ENCODE measurements at regions of chr9 and their contacts with region 1.

Region 1: DNA sequence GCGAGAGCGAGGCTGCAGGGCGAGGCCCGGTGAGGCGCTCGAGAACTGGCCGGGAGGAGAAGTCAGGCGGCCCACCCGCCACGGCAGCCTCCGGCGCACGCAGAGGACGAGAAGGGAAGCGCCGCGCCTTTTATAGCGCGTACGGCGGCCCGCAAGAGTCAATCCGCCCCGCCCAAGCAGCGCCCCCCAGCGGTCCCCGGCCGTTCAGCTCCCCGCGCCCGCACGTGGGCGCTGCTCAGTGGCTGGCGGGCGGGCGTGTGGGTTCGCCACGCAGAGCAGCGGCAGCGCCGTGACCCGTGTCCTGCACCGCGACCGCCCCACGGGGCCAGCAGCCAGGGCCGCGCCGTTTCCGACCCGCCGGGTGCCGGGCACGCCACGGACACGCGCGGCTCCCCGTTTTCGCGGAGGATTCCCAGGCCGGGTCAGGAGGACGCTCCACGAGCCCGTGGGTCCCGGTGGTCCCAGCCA is 14.6 kb downstream of the LCN10 start:
- DNase-seq: peak in 1 of 2 experiments; percentile 93
- H3K4me3 ChIP-seq: peak overlapping the region; percentile 89 to 98 (median 95)
- H3K27ac ChIP-seq: peak overlapping the region; percentile 66; the same call in 1 of the 2 replicates
- H3K4me1 ChIP-seq: peaks cover 3 to 16% (median 5%) of the 10 kb centered on the region in 4 experiments
- H3K27me3 ChIP-seq: peaks cover 0 to 9% (median 5%) of the 10 kb centered on the region in 4 experiments; a peak in 5 of 7 replicates
- CTCF ChIP-seq: peak in 2 of 3 experiments; percentile 79 to 96; a peak in 3 of 4 replicates
- EP300 ChIP-seq: no peak; a peak in 1 of 3 replicates
- POLR2A ChIP-seq: peak in 1 of 2 experiments; percentile 99; a peak in 2 of 3 replicates
- RAD21 ChIP-seq: 0 out of 4 replicates have a peak, but pooled peaks of 1 of the 2 experiments have one; percentile 10

Region 2: GRCh38 chr9:136614967-136615623 is 113.0 kb before region 1 on chr9:
- CTCF ChIA-PET with region 1: no interaction called
- POLR2A ChIA-PET with region 1: no interaction called
- DNase-seq: peak in 1 of 2 experiments; percentile 71
- H3K4me3 ChIP-seq: no peak overlapping the region
- H3K27ac ChIP-seq: no peak overlapping the region
- H3K4me1 ChIP-seq: peaks cover 0 to 9% (median 6%) of the 10 kb centered on the region in 4 experiments; a peak in 6 of 7 replicates
- H3K27me3 ChIP-seq: no peaks in the 10 kb centered on the region
- CTCF ChIP-seq: peak in 2 of 3 experiments; percentile 38 to 42; a peak in 3 of 4 replicates
- EP300 ChIP-seq: no peak
- POLR2A ChIP-seq: no peak
- RAD21 ChIP-seq: peak; percentile 41 to 60; a peak in 3 of 4 replicates

Region 3: DNA sequence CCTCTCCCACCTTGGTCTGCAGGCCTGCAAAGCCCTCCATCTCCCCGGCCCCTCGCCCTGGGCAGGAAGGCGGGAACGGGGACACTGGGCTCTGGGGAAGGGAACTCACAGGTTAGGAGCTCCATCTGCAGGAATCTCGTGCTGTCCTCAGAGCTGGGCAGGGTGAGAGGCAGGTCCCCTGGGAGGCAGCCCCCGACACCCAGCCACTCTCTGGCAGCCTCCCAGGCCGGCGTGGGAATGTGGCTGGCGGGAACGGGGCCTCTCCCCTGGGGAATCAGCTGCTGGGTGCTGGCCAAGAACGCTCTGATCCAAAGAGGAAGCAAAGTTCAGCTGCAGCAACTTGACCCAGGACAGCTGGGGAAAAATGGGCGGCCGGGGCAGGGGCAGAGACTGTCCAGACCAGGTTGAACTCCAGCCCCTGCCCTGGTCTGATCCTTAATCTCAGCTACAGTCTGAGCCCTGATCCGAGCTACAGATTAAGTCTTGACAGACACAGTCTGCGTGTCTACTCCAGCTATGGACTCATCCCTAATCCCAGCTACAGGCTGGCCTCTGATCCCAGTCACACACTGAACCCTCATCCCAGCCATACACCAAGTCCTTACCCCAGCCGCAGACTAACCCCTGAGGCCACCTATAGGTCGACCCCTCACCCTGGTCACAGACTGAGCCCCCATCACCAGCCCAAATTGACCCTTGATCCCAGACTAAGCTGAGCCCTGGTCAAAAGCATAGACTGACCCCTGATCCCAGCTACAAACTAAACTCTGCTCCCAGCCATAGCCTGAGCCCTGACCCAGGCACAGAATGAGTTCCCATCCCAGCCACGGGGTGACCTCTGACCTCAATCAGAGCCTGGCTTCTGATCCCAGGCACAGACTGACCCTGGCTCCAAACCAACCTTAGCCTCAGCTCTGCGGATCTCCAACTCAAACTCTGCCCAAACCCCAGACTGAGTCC is 102.7 kb before region 1 on chr9:
- CTCF ChIA-PET with region 1: no interaction called
- POLR2A ChIA-PET with region 1: no interaction called
- DNase-seq: peak in 1 of 2 experiments; percentile 57
- H3K4me3 ChIP-seq: no peak overlapping the region
- H3K27ac ChIP-seq: no peak overlapping the region
- H3K4me1 ChIP-seq: peaks cover 0 to 5% (median 0%) of the 10 kb centered on the region in 4 experiments; a peak in 2 of 7 replicates
- H3K27me3 ChIP-seq: no peaks in the 10 kb centered on the region
- CTCF ChIP-seq: peak in 2 of 3 experiments; percentile 49 to 69; a peak in 3 of 4 replicates
- EP300 ChIP-seq: no peak
- POLR2A ChIP-seq: no peak
- RAD21 ChIP-seq: peak; percentile 78 to 85

Region 4: DNA sequence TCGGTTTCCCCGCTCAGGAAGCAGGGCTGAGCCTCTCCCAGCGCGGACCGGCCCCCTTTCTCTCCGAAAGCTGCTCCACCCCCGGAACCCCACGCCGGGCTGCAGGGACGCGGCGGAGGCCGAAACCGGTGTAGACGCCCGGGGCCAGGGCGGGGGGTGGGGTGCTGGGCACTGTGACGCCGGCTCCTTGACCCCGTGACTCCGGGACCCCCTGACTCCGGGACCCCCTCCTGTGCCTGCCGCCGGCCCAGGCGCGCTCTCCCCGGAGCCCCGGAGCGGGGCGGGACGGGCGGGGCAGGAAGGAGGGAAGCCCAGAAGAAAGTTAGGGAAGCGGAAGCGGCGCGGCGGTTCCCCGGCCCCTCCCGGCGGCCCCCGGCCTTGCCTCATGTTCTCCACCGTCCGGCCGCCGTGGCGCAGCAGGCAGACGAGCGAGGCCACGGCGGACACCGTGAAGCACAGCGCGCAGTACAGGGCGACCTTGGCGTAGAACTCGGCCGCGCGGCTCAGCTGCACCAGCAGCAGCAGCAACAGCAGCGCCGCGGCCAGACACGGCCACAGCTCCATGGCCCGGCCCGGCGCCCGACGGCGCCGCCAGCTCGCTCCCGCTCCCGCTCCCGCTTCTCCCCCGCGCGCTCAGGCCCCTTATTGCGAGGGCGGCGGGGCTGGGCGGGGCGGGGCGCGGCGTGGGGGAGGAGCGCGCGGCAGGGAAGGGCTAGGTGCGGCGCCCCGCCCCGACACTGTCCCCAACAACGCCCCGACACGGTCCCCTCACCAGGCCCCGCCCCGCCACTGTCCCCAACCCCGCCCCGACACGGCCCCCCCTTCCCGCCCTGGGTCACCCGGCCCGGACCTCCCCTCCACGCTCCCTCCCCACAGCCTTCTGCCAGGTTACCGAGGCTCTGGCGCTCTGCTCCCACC is 41.1 kb before region 1 on chr9 and contains the start of gene AGPAT2:
- CTCF ChIA-PET with region 1: interaction called, 5 read pairs
- POLR2A ChIA-PET with region 1: interaction called, 29 read pairs
- DNase-seq: peak in 1 of 2 experiments; percentile 71
- H3K4me3 ChIP-seq: peak within 1 kb of the TSS; percentile 56 to 85 (median 64)
- H3K27ac ChIP-seq: no peak within 1 kb of the TSS
- H3K4me1 ChIP-seq: peaks cover 0 to 31% (median 18%) of the 10 kb centered on the region in 4 experiments; a peak in 5 of 7 replicates
- H3K27me3 ChIP-seq: peaks cover 0 to 11% (median 5%) of the 10 kb centered on the region in 4 experiments; a peak in 4 of 7 replicates
- CTCF ChIP-seq: no peak
- EP300 ChIP-seq: no peak
- POLR2A ChIP-seq: no peak
- RAD21 ChIP-seq: no peak
- total RNA-seq, gene AGPAT2: 30.5 and 31.6 TPM in 2 replicates

Region 5: DNA sequence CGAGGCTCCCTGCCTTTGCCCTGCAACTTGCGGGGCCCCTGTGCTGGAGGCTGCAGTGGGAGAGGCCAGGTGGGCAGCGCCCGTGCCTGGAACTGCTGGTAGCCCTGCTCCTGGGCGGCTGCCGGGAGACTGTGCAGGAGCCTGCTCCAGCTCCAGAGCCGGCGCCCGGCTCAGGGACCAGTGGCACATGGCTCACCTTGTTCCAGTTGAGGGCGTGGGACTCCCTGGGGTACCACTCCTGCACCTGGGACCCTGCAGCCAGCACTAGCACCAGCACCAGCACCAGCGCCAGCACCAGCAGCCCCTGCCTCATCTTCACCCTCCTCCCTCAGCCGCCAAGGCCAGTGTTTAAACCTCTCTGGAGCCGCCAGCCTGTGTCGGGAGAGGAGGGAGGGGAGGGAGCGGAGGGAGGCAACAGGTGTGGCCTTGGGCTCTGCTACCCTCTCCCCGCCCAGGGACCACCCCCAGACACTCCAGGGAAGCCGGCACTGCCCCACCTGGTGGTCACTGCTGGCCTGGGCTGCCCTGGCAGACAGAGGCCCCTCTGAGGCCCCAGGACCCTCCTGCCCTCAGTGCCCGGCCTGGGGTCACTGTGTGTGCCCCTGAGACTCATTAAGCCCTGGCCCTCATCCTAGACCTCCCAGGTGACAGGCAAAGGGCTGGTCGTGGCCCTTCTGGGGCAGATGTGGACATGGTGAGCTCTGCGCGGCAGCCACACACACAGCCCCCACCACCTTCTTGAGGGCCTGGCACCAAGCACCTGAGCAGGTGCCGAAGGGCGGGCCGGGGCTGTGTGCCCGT is 14.7 kb after region 1 on chr9 and contains the start of gene LCN10:
- CTCF ChIA-PET with region 1: interaction called, 36 read pairs
- POLR2A ChIA-PET with region 1: interaction called, 137 read pairs
- DNase-seq: peak in 1 of 2 experiments; percentile 89
- H3K4me3 ChIP-seq: peak within 1 kb of the TSS in 2 of 4 experiments; percentile 19 to 47; a peak in 2 of 8 replicates
- H3K27ac ChIP-seq: no peak within 1 kb of the TSS
- H3K4me1 ChIP-seq: peaks cover 0 to 20% (median 8%) of the 10 kb centered on the region in 4 experiments; a peak in 6 of 7 replicates
- H3K27me3 ChIP-seq: peaks cover 0 to 4% (median 0%) of the 10 kb centered on the region in 4 experiments; a peak in 2 of 7 replicates
- CTCF ChIP-seq: peak in 2 of 3 experiments; percentile 58 to 72; a peak in 3 of 4 replicates
- EP300 ChIP-seq: no peak
- POLR2A ChIP-seq: no peak
- RAD21 ChIP-seq: peak in 1 of 2 experiments; percentile 29; a peak in 1 of 4 replicates
- total RNA-seq, gene LCN10: 2.8 and 4.8 TPM in 2 replicates

Region 6: GRCh38 chr9:136762915-136763648 is 35.0 kb after region 1 on chr9:
- CTCF ChIA-PET with region 1: interaction called, 24 read pairs
- POLR2A ChIA-PET with region 1: interaction called, 34 read pairs
- DNase-seq: peak; percentile 78 to 96
- H3K4me3 ChIP-seq: peak overlapping the region in 1 of 4 experiments; percentile 44; a peak in 2 of 8 replicates
- H3K27ac ChIP-seq: no peak overlapping the region
- H3K4me1 ChIP-seq: peaks cover 0 to 13% (median 6%) of the 10 kb centered on the region in 4 experiments; a peak in 4 of 7 replicates
- H3K27me3 ChIP-seq: no peaks in the 10 kb centered on the region; a peak in 2 of 7 replicates
- CTCF ChIP-seq: no peak
- EP300 ChIP-seq: no peak
- POLR2A ChIP-seq: peak in 1 of 2 experiments; percentile 76; a peak in 1 of 3 replicates
- RAD21 ChIP-seq: no peak

Region 7: GRCh38 chr9:136849038-136849959 is 121.2 kb after region 1 on chr9 and contains the start of gene PHPT1:
- CTCF ChIA-PET with region 1: no interaction called
- POLR2A ChIA-PET with region 1: interaction called, 12 read pairs
- DNase-seq: peak; percentile 98
- H3K4me3 ChIP-seq: peak within 1 kb of the TSS; percentile 81 to 89 (median 84)
- H3K27ac ChIP-seq: peak within 1 kb of the TSS; percentile 90
- H3K4me1 ChIP-seq: peaks cover 0 to 18% (median 8%) of the 10 kb centered on the region in 4 experiments; a peak in 5 of 7 replicates
- H3K27me3 ChIP-seq: peaks cover 2 to 12% (median 7%) of the 10 kb centered on the region in 4 experiments; a peak in 6 of 7 replicates
- CTCF ChIP-seq: no peak
- EP300 ChIP-seq: no peak
- POLR2A ChIP-seq: peak in 1 of 2 experiments; percentile 99; a peak in 2 of 3 replicates
- RAD21 ChIP-seq: no peak
- total RNA-seq, gene PHPT1: 109 and 111 TPM in 2 replicates

Region 8: DNA sequence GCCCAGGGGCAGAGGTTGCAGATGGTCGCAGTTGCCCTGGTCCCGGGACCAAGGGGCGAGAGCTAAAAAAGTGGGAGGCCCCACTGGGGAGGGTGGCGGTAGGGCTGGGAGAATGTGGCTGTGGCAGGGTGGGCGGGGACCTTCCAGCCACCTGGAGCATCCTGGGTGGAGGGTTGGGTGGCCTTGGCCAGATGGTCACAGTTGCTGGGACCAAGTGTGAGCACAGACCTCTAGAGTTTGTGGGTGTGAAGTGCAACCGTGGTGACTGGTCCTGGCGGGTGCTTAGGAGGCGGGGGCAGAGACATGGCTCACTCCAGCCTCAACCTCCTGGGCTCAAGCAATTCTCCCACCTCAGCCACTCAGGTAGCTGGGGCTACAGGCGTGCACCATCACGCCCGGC is 152.5 kb after region 1 on chr9:
- CTCF ChIA-PET with region 1: no interaction called
- POLR2A ChIA-PET with region 1: no interaction called
- DNase-seq: no peak
- H3K4me3 ChIP-seq: no peak overlapping the region
- H3K27ac ChIP-seq: no peak overlapping the region
- H3K4me1 ChIP-seq: no peaks in the 10 kb centered on the region; a peak in 2 of 7 replicates
- H3K27me3 ChIP-seq: no peaks in the 10 kb centered on the region
- CTCF ChIP-seq: no peak
- EP300 ChIP-seq: no peak
- POLR2A ChIP-seq: no peak
- RAD21 ChIP-seq: no peak

Measured in H1 (cell line).